ENCODE measurements at regions of chr5 and their contacts with region 1.

Region 1: GRCh38 chr5:142611154-142611553 is 74.7 kb downstream of the FGF1 start:
- DNase-seq: peak; percentile 78 to 88
- H3K4me3 ChIP-seq: no peak overlapping the region
- H3K27ac ChIP-seq: peak overlapping the region; percentile 10 to 37
- H3K4me1 ChIP-seq: peaks cover 0 to 29% (median 4%) of the 10 kb centered on the region in 4 donors
- H3K27me3 ChIP-seq: no peaks in the 10 kb centered on the region
- CTCF ChIP-seq: peak; percentile 93 to 97

Region 2: DNA sequence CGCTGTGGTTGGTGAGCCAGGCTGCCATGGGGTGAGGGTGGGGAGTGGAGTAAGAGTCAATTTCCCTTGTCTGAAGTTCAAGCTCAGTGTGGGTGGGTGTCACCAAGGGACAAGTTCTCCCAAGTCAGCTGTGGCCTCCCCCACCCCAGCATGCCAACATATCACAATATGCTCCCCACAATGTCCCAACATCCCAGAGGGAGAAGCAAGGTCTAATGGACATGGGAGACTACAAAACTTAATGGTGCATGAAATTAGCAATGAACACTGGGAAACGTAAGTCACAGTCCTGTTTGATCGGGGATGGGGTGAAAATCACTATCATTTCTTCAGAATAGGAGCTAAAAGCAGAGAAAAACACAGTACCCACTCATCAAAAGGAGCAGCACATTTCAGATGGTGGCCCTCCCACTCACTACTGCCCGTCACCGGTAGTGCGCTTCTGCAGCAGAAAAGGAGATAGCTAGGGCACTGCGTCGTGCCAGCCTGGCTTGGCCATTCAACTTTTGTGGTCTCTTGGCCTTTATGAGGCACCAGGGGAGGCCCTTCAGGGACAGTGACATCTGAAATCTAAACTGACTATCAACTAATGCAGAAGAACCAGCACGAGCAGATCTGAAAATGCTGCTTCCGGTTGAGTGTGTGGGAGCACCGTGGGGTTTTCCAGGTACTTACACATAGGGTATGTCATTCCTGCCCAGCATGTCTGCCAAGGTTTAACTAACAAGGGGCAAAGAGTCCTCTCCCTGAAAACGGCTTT is 523.1 kb before region 1 on chr5:
- intact Hi-C with region 1: no loop called
- DNase-seq: no peak
- H3K4me3 ChIP-seq: no peak overlapping the region
- H3K27ac ChIP-seq: no peak overlapping the region
- H3K4me1 ChIP-seq: no peaks in the 10 kb centered on the region
- H3K27me3 ChIP-seq: no peaks in the 10 kb centered on the region
- CTCF ChIP-seq: no peak

Region 3: DNA sequence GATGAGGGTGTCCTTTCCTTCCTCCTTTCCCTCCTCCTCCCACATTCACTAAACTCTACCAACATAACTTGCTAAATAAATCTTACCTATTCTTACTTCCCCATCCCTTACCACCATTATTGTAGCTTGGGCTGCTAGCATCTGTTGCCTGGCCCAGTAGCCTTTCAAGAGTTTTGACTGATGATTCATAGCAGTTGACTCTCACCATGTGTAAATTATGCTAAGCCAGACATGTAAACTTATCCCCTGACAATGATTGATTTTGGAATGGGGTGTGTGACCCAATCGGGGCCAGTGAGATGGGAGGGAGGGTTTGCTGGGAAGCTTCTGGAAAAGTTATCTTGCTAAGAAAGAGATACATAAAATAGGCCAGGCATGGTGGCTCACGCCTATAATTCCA is 124.6 kb before region 1 on chr5:
- intact Hi-C with region 1: no loop called
- DNase-seq: no peak
- H3K4me3 ChIP-seq: no peak overlapping the region
- H3K27ac ChIP-seq: no peak overlapping the region
- H3K4me1 ChIP-seq: peaks cover 0 to 4% (median 0%) of the 10 kb centered on the region in 4 donors
- H3K27me3 ChIP-seq: no peaks in the 10 kb centered on the region
- CTCF ChIP-seq: no peak

Region 4: GRCh38 chr5:142655339-142656267 is 44.4 kb after region 1 on chr5:
- intact Hi-C with region 1: loop called (anchors 5 kb)
- DNase-seq: peak; percentile 92
- H3K4me3 ChIP-seq: peak overlapping the region in 1 of 2 donors; percentile 6
- H3K27ac ChIP-seq: peak overlapping the region; percentile 57 to 69
- H3K4me1 ChIP-seq: peaks cover 0 to 32% (median 17%) of the 10 kb centered on the region in 4 donors
- H3K27me3 ChIP-seq: no peaks in the 10 kb centered on the region
- CTCF ChIP-seq: peak; percentile 97 to 99

Region 5: GRCh38 chr5:142688281-142688989 is 77.3 kb after region 1 on chr5:
- intact Hi-C with region 1: no loop called
- DNase-seq: no peak
- H3K4me3 ChIP-seq: no peak overlapping the region
- H3K27ac ChIP-seq: peak overlapping the region; percentile 29 to 77
- H3K4me1 ChIP-seq: peaks cover 0 to 49% (median 20%) of the 10 kb centered on the region in 4 donors
- H3K27me3 ChIP-seq: no peaks in the 10 kb centered on the region
- CTCF ChIP-seq: no peak

Region 6: GRCh38 chr5:142769741-142770631 is 158.8 kb after region 1 on chr5 and contains the start of gene ARHGAP26:
- intact Hi-C with region 1: no loop called
- DNase-seq: peak; percentile 97 to 99
- H3K4me3 ChIP-seq: peak within 1 kb of the TSS; percentile 70 to 71
- H3K27ac ChIP-seq: peak within 1 kb of the TSS; percentile 77 to 84
- H3K4me1 ChIP-seq: peaks cover 0 to 26% (median 16%) of the 10 kb centered on the region in 4 donors
- H3K27me3 ChIP-seq: no peaks in the 10 kb centered on the region
- CTCF ChIP-seq: peak; percentile 11 to 31